K562 (cell line): ENCODE measurements at regions of chr2 and their contacts with region 1.

Region 1: DNA sequence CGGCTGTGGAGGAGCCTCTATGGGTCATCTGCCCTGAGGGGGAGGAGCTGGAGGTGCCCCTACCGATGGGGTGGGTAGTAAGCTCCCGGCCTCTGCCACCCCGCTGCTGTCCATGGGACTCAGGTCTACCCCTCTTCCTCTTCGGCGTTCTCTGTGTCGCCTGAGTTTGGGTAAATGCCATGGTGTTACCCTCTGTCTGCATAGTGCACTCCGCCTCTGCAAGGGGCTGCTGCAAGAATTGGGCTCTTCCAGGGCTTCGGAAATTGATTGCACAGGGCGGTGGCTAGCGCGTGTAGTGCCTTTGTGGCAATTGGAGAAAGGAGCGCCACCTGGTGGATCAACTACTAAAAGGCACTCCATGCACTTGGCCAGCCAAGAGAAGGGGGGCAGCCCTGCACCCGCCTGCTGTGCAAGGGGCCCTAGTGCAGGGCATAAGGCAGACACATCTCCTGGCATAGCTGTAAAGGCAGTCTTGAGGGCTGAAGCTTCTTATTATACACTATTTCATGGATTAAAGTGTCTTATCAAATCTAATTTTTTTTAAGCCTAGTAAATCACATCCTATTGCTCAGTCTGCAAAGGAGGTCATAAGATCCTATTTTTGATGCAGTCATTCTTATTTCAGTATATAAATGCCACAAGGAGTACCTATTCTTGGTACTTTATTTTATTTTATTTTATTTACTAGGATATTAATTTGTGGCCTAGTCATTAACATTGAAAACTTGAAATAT is 308.9 kb downstream of the PDE11A start:
- DNase-seq: peak; percentile 74 to 90 (median 85)
- ATAC-seq: peak; percentile 98
- H3K4me3 ChIP-seq: no peak overlapping the region
- H3K27ac ChIP-seq: no peak overlapping the region
- H3K4me1 ChIP-seq: peaks cover 4 to 16% of the 10 kb centered on the region in 2 experiments; a peak in 4 of 5 replicates
- H3K27me3 ChIP-seq: no peaks in the 10 kb centered on the region
- CTCF ChIP-seq: peak; percentile 91 to 96 (median 92)
- EP300 ChIP-seq: no peak
- POLR2A ChIP-seq: no peak
- RAD21 ChIP-seq: peak; percentile 69 to 77

Region 2: DNA sequence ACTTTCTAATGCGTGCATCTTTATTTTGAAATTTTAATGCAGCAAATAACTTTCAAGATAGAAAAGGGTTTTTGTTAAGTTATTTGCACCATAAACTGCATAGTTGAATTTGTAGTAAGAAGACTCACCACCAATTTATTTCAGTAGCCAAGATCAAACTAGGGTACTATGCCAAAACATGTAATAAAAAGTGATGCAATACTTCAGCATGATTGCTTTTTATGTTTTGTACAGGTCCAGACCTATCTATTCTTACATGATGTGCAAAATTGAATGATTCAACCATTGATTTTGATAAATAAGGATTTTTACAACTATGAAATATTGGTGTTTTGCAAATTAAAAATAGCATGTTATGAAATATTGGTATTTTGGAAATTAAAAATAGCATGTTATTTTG is 344.4 kb before region 1 on chr2:
- CTCF ChIA-PET with region 1: no interaction called
- POLR2A ChIA-PET with region 1: no interaction called
- in situ Hi-C with region 1: no loop called
- intact Hi-C with region 1: loop called (anchors 2 kb)
- DNase-seq: no peak
- ATAC-seq: peak; percentile 37; the same call in 1 of the 3 replicates
- H3K4me3 ChIP-seq: no peak overlapping the region
- H3K27ac ChIP-seq: no peak overlapping the region
- H3K4me1 ChIP-seq: no peaks in the 10 kb centered on the region
- H3K27me3 ChIP-seq: no peaks in the 10 kb centered on the region
- CTCF ChIP-seq: no peak
- EP300 ChIP-seq: no peak
- POLR2A ChIP-seq: no peak
- RAD21 ChIP-seq: no peak

Region 3: GRCh38 chr2:177489719-177490301 is 273.9 kb before region 1 on chr2:
- CTCF ChIA-PET with region 1: interaction called, 18 read pairs
- POLR2A ChIA-PET with region 1: no interaction called
- in situ Hi-C with region 1: no loop called
- intact Hi-C with region 1: loop called (anchors 1 kb)
- DNase-seq: peak in 3 of 4 experiments; percentile 19 to 35 (median 21)
- ATAC-seq: peak; percentile 70
- H3K4me3 ChIP-seq: no peak overlapping the region
- H3K27ac ChIP-seq: no peak overlapping the region
- H3K4me1 ChIP-seq: no peaks in the 10 kb centered on the region
- H3K27me3 ChIP-seq: no peaks in the 10 kb centered on the region
- CTCF ChIP-seq: peak; percentile 36 to 83 (median 50); a peak in 5 of 6 replicates
- EP300 ChIP-seq: no peak
- POLR2A ChIP-seq: no peak
- RAD21 ChIP-seq: peak; percentile 74 to 84

Region 4: DNA sequence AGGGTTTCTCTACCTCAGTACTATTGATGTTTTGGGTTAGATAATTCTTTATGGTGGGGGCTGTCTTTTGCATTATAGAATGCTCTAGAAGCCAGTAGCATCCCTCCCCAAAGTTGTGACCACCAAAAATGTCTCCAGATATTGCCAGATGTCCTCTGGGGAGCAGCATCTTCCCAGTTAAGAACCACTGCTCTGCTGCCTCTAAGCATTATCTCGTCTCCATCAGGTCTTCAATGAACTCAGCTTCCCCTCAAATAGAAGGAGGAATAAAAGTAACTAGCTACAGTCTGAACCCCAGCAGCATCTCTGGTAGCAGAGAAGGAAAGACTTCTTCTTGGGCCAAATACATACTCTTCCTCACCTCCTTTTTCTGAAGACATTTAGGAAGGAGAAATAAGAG is 127.0 kb before region 1 on chr2:
- CTCF ChIA-PET with region 1: interaction called, 5 read pairs
- POLR2A ChIA-PET with region 1: no interaction called
- in situ Hi-C with region 1: no loop called
- intact Hi-C with region 1: loop called (anchors 1 kb)
- DNase-seq: peak in 1 of 4 experiments; percentile 52
- ATAC-seq: peak; percentile 41
- H3K4me3 ChIP-seq: no peak overlapping the region
- H3K27ac ChIP-seq: no peak overlapping the region
- H3K4me1 ChIP-seq: peaks cover 0 to 22% of the 10 kb centered on the region in 2 experiments; a peak in 3 of 5 replicates
- H3K27me3 ChIP-seq: no peaks in the 10 kb centered on the region; a peak in 1 of 5 replicates
- CTCF ChIP-seq: peak; percentile 43 to 69 (median 46); a peak in 5 of 6 replicates
- EP300 ChIP-seq: no peak
- POLR2A ChIP-seq: no peak
- RAD21 ChIP-seq: peak; percentile 80 to 85

Region 5: GRCh38 chr2:177900082-177900481 is 136.4 kb after region 1 on chr2:
- CTCF ChIA-PET with region 1: no interaction called
- POLR2A ChIA-PET with region 1: no interaction called
- in situ Hi-C with region 1: no loop called
- intact Hi-C with region 1: no loop called
- DNase-seq: no peak
- ATAC-seq: no peak
- H3K4me3 ChIP-seq: no peak overlapping the region
- H3K27ac ChIP-seq: no peak overlapping the region
- H3K4me1 ChIP-seq: no peaks in the 10 kb centered on the region; a peak in 1 of 5 replicates
- H3K27me3 ChIP-seq: no peaks in the 10 kb centered on the region
- CTCF ChIP-seq: no peak
- EP300 ChIP-seq: no peak
- POLR2A ChIP-seq: no peak
- RAD21 ChIP-seq: no peak

Region 6: GRCh38 chr2:177989029-177989885 is 225.6 kb after region 1 on chr2:
- CTCF ChIA-PET with region 1: no interaction called
- POLR2A ChIA-PET with region 1: no interaction called
- in situ Hi-C with region 1: no loop called
- intact Hi-C with region 1: no loop called
- DNase-seq: no peak
- ATAC-seq: no peak
- H3K4me3 ChIP-seq: no peak overlapping the region
- H3K27ac ChIP-seq: no peak overlapping the region
- H3K4me1 ChIP-seq: no peaks in the 10 kb centered on the region
- H3K27me3 ChIP-seq: 0 out of 5 replicates have a peak, but pooled peaks cover 0 to 2% of the 10 kb centered on the region in 2 experiments
- CTCF ChIP-seq: no peak
- EP300 ChIP-seq: no peak
- POLR2A ChIP-seq: no peak
- RAD21 ChIP-seq: no peak